Psoas muscle (tissue), 8 donors: ENCODE measurements at regions of chr20 and their contacts with region 1.

Region 1: GRCh38 chr20:13119583-13119982 is 101.5 kb upstream of the ISM1 start:
- DNase-seq: no peak
- ATAC-seq: peak; percentile 55 to 95 (median 76)
- H3K4me3 ChIP-seq: no peak overlapping the region
- H3K27ac ChIP-seq: no peak overlapping the region
- H3K4me1 ChIP-seq: no peaks in the 10 kb centered on the region
- H3K27me3 ChIP-seq: no peaks in the 10 kb centered on the region
- CTCF ChIP-seq: peak; percentile 81

Region 2: DNA sequence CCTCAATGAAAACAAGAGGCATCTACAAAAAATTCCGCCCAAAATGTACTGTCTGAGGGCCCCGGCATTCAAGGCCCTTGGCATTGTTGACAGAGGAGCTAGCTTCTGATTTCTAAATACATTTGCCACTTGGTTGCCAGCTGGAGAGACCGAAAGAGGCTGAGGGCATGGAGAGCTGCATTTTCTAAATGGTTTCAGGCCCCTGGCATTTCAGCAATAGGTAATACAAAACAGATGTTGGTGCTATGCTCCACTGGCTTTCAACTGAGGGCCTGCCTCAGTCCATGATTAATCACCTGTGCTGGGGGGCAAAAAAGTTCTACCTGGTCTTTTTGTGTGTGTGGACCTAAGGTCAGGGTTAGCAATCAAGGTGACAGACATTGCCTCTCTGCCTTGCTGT is 22.0 kb after region 1 on chr20:
- intact Hi-C with region 1: no loop called
- DNase-seq: no peak
- ATAC-seq: no peak
- H3K4me3 ChIP-seq: no peak overlapping the region
- H3K27ac ChIP-seq: no peak overlapping the region
- H3K4me1 ChIP-seq: peaks cover 3% of the 10 kb centered on the region
- H3K27me3 ChIP-seq: no peaks in the 10 kb centered on the region
- CTCF ChIP-seq: no peak

Region 3: DNA sequence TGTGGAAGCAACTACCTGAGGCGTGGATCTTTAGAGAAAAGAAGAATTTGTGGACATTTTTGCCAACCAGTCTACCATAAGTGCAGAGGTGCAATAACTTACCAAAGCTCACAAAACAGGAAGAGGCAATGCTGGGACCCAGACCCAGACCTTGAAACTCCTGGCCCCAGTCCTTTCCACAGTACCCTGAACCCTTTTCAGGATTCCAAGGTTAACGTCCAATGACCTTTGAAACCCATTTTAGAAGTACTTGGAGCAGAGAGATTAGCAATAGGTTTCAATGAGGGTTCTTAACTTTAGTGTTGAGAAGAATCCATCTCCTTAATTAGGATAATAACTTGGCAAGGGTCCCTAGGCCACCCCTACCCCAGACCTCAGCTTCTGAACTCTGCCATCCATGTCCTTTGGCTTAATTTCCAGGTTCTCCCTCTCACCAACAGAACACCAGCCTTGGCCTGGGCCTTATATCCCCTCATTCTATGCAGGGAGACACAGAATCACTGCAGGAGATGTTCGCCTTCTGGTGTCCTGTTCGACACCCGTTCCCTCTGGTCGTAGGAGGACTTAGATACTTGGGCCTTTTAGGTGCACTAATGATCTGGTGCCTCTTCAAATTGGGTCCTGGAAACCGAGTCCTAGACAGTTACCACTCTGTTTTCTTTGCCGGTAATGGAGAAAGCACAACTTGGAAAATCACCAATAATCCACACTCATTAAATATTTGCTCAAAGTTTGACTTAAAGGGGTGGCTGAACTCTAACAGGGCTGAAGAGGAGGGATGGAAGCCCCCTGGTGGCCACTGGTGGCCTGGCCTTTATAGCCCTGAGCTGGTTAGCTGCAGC is 142.1 kb after region 1 on chr20:
- intact Hi-C with region 1: loop called (anchors 5 kb)
- DNase-seq: peak; percentile 56 to 71
- ATAC-seq: peak in 3 of 4 donors; percentile 51 to 80 (median 57)
- H3K4me3 ChIP-seq: no peak overlapping the region
- H3K27ac ChIP-seq: no peak overlapping the region
- H3K4me1 ChIP-seq: no peaks in the 10 kb centered on the region
- H3K27me3 ChIP-seq: no peaks in the 10 kb centered on the region
- CTCF ChIP-seq: peak; percentile 62

Region 4: GRCh38 chr20:13302647-13303450 is 183.3 kb after region 1 on chr20:
- intact Hi-C with region 1: loop called (anchors 2 to 10 kb)
- DNase-seq: no peak
- ATAC-seq: peak in 2 of 4 donors; percentile 44 to 66
- H3K4me3 ChIP-seq: no peak overlapping the region
- H3K27ac ChIP-seq: no peak overlapping the region
- H3K4me1 ChIP-seq: no peaks in the 10 kb centered on the region
- H3K27me3 ChIP-seq: no peaks in the 10 kb centered on the region
- CTCF ChIP-seq: peak; percentile 57

Region 5: DNA sequence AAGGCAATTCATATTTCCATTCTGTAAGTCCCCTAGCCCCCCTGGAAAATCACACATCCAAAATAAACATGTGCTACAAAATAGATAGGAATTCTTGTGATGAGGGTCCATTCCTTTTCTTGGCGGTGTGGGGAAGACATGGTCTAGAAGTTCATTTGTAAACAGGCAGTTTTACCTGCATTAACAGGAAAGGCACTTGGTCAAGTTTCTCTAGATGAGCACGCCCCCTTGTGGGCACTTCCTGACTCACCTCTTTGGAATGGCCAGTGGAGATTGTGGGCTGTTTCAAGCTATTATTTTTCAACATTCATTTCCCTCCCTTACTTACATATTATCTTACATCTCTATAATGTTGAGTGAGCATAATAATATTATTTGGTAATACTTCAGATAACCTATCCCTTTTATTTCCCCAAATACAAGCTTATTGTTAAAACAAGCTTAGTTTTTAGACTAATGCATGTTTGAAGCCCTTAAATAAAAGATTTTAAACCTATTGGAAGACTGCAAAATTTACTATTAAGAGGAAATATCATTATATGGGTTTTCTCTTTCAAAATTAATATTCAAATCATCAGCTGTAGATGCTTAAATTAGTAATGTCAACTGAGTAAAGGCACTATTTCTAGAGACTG is 427.0 kb after region 1 on chr20:
- intact Hi-C with region 1: loop called (anchors 5 kb)
- DNase-seq: peak; percentile 69 to 71
- ATAC-seq: peak in 3 of 4 donors; percentile 25 to 67 (median 51)
- H3K4me3 ChIP-seq: no peak overlapping the region
- H3K27ac ChIP-seq: no peak overlapping the region
- H3K4me1 ChIP-seq: no peaks in the 10 kb centered on the region
- H3K27me3 ChIP-seq: no peaks in the 10 kb centered on the region
- CTCF ChIP-seq: peak; percentile 64

Region 6: DNA sequence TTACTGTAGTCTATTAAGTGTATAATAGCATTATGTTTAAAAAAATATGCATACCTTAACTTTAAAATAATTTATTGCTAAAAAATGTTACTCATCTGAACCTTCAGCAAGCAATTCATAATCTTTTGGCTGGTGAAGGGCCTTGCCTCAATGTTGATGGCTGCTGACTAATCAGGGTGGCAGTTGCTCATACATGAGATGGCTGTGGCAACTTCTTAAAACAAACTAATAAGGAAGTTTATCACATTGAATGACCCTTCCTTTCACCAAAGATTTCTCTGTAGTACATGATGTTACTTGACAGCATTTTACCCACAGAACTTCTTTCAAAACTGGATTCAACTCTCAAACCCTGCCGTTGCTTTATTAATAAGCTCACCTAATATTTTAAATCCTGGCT is 435.1 kb after region 1 on chr20:
- intact Hi-C with region 1: loop called (anchors 5 kb)
- DNase-seq: no peak
- ATAC-seq: no peak
- H3K4me3 ChIP-seq: no peak overlapping the region
- H3K27ac ChIP-seq: no peak overlapping the region
- H3K4me1 ChIP-seq: no peaks in the 10 kb centered on the region
- H3K27me3 ChIP-seq: no peaks in the 10 kb centered on the region
- CTCF ChIP-seq: no peak

Region 7: DNA sequence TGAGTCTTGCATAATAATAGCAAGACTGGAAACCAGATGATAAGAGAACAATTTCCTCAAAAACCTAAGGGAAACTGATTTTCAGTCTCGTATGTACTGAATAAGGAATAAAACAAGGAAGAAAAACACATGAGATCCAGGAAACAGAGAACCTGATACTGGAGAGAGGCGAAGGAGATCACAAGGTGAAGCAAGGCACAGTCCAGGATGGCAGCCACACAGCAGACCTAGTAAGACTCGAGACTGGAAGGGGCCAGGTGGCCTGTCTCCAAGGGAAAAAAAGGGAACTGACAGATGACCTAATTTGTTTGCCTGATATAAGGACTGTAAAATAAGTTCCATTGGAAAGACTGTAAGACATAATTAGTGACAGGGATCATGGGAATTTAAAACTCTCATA is 448.1 kb after region 1 on chr20:
- intact Hi-C with region 1: no loop called
- DNase-seq: peak in 1 of 2 donors; percentile 42
- ATAC-seq: peak; percentile 44 to 83 (median 62)
- H3K4me3 ChIP-seq: no peak overlapping the region
- H3K27ac ChIP-seq: no peak overlapping the region
- H3K4me1 ChIP-seq: peaks cover 6% of the 10 kb centered on the region
- H3K27me3 ChIP-seq: no peaks in the 10 kb centered on the region
- CTCF ChIP-seq: no peak

Region 8: GRCh38 chr20:13771853-13772453 is 652.4 kb after region 1 on chr20:
- intact Hi-C with region 1: loop called in 1 of 2 experiments (anchors 5 kb)
- DNase-seq: no peak
- ATAC-seq: peak in 1 of 4 donors; percentile 65
- H3K4me3 ChIP-seq: no peak overlapping the region
- H3K27ac ChIP-seq: no peak overlapping the region
- H3K4me1 ChIP-seq: peaks cover 4% of the 10 kb centered on the region
- H3K27me3 ChIP-seq: no peaks in the 10 kb centered on the region
- CTCF ChIP-seq: peak; percentile 59

Region 9: GRCh38 chr20:13800728-13801134 is 681.1 kb after region 1 on chr20:
- intact Hi-C with region 1: no loop called
- DNase-seq: peak; percentile 93 to 97
- ATAC-seq: peak; percentile 99 to 100 (median 100)
- H3K4me3 ChIP-seq: peak overlapping the region; percentile 38
- H3K27ac ChIP-seq: peak overlapping the region; percentile 84
- H3K4me1 ChIP-seq: peaks cover 18% of the 10 kb centered on the region
- H3K27me3 ChIP-seq: no peaks in the 10 kb centered on the region
- CTCF ChIP-seq: no peak

Region 10: DNA sequence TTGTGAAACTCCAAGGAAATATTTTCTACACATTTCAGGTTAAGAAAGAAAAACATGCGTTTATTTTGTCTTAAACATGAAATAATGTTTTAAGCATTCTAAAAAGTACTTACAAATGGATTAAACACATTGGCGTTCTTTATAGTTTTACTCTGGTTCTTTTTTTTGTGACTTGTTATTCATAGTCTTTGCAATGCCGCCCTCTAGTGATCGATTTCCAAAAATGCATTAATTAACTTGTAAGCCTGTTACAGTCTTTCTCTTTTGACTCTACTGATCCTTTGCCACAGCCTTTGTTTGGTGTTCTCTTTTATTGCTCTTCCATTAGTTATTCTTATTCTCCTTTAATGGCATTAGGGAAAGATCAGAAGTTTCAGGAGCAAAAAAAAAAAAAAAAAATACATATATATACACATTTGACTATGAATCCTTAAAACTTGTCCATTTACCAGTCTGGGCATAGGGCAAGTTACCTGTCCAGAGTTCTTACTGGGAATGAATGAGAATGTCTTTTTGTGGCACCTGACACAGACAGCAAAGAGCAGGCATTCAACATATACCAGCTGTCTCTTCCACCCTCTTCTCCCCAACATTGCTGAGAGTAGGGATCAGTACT is 935.7 kb after region 1 on chr20:
- intact Hi-C with region 1: loop called in 1 of 2 experiments (anchors 10 kb)
- DNase-seq: no peak
- ATAC-seq: peak in 2 of 4 donors; percentile 44 to 84
- H3K4me3 ChIP-seq: no peak overlapping the region
- H3K27ac ChIP-seq: no peak overlapping the region
- H3K4me1 ChIP-seq: no peaks in the 10 kb centered on the region
- H3K27me3 ChIP-seq: no peaks in the 10 kb centered on the region
- CTCF ChIP-seq: peak; percentile 67